HEK293 (cell line): ENCODE measurements at regions of chr1 and their contacts with region 1.

Region 1: DNA sequence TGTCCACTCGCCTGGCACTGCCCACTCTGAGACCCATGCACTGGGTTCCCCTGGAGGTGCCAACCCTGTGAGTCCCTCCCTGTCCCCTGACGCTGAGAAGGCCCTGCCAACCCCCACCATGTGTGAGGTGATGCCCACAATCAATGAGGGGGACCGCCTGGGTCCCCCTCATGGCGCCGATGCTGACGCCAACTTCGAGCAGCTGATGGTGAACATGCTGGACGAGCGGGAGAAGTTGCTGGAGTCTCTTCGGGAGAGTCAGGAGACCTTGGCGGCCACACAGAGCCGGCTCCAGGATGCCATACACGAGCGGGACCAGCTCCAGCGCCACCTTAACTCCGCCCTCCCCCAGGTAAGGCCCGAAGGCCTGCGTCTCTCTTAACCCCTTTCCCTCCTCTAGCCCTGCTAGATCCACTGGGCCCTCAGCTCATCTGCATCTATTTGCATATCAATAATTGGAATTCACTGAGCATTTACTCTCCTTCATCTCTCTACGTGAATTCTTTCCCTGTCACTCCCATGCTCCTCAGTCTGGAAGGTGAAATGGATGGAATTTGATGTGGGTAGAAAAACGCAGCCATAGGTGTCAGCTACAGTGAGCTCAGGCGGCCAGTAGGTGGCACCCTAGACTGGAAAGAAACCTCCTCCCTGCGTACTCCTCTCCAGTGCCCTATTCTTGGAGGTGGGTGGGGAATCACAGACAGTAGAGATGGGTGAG is 12.8 kb downstream of the PPFIA4 start:
- H3K4me3 ChIP-seq: no peak overlapping the region
- H3K27ac ChIP-seq: no peak overlapping the region
- H3K4me1 ChIP-seq: no peaks in the 10 kb centered on the region; the same call in 1 of the 2 replicates
- CTCF ChIP-seq: peak; percentile 82

Region 2: DNA sequence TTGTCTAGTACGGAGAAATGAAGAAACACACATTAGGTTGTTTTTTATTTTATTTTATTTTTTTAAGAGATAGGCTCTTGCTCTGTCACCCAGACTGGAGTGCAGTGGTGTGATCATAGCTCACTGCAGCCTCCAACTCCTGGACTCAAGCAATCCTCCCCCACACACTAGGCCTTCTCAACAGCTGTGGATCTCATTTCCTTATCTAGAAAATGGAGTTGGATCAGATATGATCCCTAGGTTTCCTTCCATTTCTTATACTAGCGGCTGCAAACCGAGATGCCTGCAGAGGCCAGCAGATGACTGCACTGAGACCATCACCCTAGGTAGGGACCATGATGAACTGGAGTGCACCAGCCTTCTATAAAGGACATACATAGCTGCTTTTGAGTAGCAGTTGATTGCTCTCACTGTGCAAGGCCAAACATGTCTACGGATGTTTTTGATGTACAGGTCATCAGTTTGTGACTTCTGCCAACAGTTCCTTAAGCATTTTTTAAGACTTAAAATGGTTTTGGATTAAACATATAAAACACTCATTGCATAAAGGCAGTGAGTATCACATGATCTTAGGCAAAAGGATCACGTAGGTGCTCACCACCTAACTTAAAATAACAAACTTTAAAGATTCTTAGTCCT is 100.6 kb before region 1 on chr1:
- CTCF ChIA-PET with region 1: no interaction called
- POLR2A ChIA-PET with region 1: no interaction called
- H3K4me3 ChIP-seq: no peak overlapping the region
- H3K27ac ChIP-seq: no peak overlapping the region
- H3K4me1 ChIP-seq: no peaks in the 10 kb centered on the region
- CTCF ChIP-seq: no peak

Region 3: DNA sequence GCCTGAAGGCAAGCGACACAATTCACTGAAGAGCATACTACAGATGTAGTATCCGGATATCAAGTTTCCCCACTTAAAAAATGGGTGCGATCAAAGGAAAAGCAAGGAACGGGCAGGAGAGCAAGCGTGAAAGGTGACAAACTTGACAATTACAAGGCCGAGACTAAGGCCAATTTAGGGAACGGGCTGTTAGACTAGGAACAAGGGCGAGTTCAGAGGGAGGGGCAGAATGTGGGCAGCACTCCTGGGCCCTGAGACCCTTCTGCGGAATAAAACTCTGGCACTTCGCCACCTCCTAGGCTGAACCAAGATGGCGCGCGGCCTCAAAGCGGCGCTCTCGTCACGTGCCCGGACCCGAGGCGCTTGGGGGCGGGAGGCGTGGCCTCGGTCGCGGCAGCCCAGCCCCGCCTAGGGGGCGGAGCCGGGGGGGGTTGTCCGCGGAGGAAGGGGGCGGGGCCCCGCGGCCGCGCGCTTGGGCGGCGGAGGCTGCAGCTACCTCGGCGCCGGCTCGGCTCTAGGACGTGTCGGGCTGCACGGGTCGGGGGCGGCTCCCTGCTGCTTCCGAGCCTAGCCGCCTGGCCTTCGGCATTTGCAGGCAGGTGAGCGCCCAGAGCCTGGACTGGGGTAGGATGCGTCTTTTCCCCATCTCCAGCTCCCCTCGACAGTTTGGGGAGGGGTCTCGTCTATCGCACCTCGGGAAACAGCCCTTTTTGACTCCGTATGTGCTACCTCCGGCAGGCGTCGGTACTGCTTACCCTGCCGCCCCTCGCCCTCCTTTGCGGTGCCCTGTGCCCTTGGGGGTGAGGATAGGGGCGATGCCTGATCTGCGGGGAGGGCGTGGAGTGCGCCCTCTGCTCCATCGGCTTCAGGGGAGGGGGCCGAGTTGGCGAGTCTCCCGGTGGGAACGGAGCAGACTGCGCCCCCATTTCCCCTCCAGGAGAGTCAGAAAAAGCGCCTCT is 12.7 kb before region 1 on chr1 and contains the start of gene PPFIA4:
- CTCF ChIA-PET with region 1: interaction called, 96 read pairs
- POLR2A ChIA-PET with region 1: interaction called, 5 read pairs
- H3K4me3 ChIP-seq: peak within 1 kb of the TSS; percentile 56
- H3K27ac ChIP-seq: no peak within 1 kb of the TSS; the same call in 1 of the 2 replicates
- H3K4me1 ChIP-seq: no peaks in the 10 kb centered on the region
- CTCF ChIP-seq: peak; percentile 41; the same call in 1 of the 2 replicates

Region 4: DNA sequence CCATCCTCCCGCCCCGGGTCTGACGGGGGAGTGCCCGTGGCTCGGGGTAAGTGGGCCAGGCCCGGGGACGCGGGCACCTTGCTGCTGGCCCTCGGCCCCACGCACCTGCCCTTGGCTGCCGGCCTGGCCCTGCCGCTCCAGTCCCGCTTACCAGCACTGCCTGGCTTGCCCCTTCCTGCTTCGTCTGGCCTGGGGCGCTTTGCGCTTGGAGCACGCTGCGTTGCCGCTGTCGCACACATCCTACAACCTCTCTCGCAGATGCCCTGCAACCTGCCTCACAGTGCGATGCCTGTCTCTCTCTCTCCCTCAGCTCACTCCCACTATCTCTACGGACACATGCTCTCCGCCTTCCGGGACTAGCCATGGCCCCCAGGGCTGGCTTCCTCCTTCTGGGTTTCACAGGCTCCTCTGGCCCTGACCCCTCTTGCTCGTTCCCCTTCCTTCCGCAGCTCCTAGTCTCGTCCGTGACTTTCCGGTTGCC is 37.0 kb after region 1 on chr1:
- CTCF ChIA-PET with region 1: interaction called, 12 read pairs
- POLR2A ChIA-PET with region 1: no interaction called
- H3K4me3 ChIP-seq: no peak overlapping the region
- H3K27ac ChIP-seq: no peak overlapping the region
- H3K4me1 ChIP-seq: no peaks in the 10 kb centered on the region
- CTCF ChIP-seq: no peak

Region 5: DNA sequence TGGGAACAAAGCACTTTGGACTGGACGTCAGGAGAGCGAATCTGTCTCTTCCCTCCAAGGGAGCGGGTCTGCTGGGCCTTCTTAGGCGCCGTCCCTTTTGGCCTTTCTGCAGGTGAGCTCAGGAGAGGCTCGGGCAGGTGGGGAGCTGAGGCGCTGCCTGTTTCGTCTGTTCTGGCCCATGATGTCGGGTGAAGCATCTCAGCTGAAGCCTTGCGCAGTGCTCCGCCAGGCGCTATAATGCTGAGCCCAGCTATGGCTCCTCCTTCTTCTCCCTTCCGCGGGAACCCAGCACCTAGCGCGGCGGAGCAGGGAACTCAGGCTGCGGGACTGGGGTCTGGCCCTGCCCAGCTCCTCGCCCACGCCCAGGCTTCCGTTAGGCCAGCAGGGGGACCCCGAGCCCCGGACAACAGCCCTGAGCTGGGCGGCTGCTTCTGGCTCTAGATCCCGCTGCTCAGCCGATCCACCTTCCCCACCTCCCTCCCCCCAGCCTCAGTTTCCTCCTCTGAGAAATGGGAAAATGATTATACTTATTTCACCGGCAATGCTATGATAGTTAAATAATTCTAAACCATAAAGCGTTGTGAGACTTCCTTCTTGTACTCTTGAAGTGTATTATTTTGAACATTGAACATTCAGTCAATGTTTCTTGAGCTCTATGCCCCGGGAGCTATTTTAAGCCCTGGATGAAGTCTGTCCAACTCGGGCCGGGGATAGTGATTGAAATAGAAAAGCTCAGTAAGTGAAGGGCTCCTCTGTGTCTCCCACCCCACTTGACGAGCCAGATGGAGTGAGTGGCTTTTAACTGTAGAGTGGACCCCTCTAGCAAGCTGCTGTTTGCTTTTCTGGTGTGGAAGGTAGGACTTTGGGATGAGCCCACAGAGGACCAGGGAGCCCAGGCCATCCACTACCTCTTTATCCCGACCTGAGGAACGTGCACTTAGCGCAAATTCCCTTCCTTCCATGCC is 78.8 kb after region 1 on chr1:
- CTCF ChIA-PET with region 1: interaction called, 71 read pairs
- POLR2A ChIA-PET with region 1: no interaction called
- H3K4me3 ChIP-seq: no peak overlapping the region
- H3K27ac ChIP-seq: no peak overlapping the region
- H3K4me1 ChIP-seq: no peaks in the 10 kb centered on the region
- CTCF ChIP-seq: peak; percentile 92

Region 6: DNA sequence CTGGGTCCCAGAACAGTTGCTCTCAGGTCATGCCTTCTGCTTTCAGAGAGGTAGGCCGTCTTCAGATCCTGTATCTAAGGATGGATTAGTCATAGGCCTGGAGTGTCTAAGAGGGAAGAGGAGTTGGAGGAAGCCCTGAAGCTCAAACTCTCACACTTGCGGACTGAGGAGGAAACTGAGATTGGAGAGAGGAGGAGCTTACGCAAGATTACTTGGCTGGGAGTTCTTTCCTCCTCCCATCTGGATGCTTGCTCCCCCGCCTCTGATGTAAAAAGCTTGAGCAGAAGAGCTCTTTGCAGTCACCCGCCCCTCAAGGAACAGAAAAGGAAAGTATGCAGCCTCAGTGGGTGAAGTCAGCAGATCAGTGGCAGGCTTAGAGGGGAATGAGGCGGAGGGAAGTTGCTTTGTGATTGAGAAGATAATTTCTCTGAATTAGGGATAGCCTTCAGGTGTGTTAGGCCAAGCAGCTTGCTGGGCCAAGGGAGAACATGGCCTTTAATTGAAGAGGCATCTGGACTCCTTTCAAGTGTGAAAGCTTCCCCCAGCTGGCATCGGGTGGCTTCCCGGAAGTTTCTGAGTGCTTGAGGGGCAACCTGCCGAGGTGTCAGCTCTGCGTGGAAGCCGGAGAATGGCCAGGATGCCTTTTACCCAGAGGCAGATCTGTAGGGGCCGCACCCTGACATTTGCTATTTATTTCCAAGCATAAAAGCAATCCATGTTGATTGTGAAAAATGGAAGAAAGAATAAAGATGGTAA is 95.1 kb after region 1 on chr1:
- CTCF ChIA-PET with region 1: interaction called, 70 read pairs
- POLR2A ChIA-PET with region 1: no interaction called
- H3K4me3 ChIP-seq: no peak overlapping the region
- H3K27ac ChIP-seq: no peak overlapping the region
- H3K4me1 ChIP-seq: no peaks in the 10 kb centered on the region
- CTCF ChIP-seq: no peak

Region 7: DNA sequence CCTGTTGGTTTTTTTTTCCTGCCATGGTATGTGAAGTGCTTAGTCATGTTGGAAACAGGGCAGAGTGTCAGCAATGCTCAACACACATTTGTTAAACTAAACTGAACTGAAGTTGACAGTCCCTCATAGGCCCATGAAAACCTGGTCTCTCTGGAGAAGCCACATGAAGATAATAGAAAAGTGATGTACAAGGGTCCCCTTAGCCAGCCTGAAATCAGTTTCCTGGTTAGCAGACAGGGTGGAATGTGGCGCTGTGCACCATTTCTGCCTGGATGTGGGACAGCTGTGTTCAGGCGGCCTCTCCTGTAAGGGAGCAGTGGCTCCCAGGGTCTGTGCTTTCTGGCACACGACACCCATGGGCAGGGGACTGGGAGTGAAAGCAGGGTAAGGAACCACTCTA is 157.3 kb after region 1 on chr1:
- CTCF ChIA-PET with region 1: interaction called, 10 read pairs
- POLR2A ChIA-PET with region 1: no interaction called
- H3K4me3 ChIP-seq: no peak overlapping the region
- H3K27ac ChIP-seq: no peak overlapping the region
- H3K4me1 ChIP-seq: no peaks in the 10 kb centered on the region
- CTCF ChIP-seq: no peak

Region 8: GRCh38 chr1:203216274-203217138 is 177.5 kb after region 1 on chr1:
- CTCF ChIA-PET with region 1: interaction called, 293 read pairs
- POLR2A ChIA-PET with region 1: interaction called, 3 read pairs
- H3K4me3 ChIP-seq: no peak overlapping the region
- H3K27ac ChIP-seq: no peak overlapping the region
- H3K4me1 ChIP-seq: no peaks in the 10 kb centered on the region
- CTCF ChIP-seq: peak; percentile 65